WTC11 (cell line): ENCODE measurements at regions of chr1 and their contacts with region 1.

Region 1: DNA sequence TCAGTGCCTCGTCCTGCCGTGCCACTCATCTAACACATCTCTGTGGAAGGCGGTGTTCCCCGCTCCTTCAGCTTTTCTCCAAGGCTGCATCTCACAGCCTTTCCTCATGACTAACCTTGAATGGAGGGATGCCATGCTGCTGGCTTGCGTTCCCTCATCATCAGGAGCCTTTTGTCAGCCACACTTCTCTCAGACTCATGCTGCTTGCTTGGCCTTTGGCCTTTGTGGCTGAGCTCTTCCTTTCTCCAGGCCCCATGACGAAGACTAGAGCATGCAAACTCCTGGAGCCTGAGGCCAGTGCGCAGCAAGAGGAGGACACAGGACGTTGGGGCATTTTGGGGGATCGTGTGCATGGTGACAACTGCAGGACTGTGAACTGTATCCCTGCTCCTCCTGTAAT is 70.8 kb downstream of the SYT2 start:
- DNase-seq: no peak
- ATAC-seq: no peak
- H3K4me3 Mint-ChIP-seq: no peak overlapping the region
- H3K27ac Mint-ChIP-seq: no peak overlapping the region
- H3K4me1 Mint-ChIP-seq: peaks cover 50% of the 10 kb centered on the region
- H3K27me3 Mint-ChIP-seq: peaks cover 27% of the 10 kb centered on the region
- CTCF ChIP-seq: no peak

Region 2: DNA sequence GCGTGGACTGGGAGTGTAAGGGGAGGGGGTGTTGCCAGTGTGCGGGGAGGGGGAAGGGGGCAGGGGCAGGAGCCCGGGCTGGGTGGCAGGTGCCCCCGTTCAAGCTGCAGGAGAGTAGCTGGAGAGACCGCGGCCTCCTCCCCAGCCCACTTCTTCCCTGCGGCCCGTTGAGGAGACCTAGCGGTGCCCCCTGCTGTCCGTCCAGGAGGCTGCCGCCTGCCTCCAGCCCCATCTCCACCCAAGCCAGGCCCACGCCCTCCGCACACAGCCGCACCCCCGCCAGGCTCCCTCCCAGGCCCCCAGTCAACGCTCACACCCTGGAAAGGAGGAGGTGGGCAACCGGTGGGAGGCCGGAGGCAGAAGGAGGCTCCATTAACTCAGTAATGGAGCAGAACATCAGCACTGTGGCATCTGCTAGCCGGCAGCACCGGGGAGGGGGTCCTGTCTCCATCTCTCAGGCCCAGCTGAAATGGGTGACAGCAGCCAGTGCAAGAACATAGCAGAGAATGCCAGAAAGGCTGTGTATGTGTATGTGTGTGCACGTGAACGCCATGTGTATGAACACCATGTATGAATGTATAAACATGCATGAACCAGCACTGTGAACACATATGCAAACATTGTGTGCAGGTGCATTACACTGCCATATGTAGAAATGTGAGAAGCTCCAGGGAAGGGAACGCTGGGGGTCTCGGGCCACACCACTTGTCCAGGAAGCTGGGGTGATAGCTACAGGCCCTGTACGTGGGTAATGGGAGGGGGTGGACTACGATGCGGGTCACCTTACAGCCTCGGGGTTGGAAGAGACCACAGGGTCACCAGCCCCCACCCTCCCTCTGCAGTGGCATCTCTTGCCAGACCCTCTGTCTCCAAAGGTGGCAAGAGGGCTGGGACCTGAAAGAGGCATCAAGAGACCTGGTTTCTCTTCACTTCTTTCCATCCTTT is 13.8 kb before region 1 on chr1:
- CTCF ChIA-PET with region 1: interaction called, 21 read pairs
- POLR2A ChIA-PET with region 1: no interaction called
- DNase-seq: peak; percentile 84
- ATAC-seq: peak; percentile 84
- H3K4me3 Mint-ChIP-seq: no peak overlapping the region
- H3K27ac Mint-ChIP-seq: no peak overlapping the region
- H3K4me1 Mint-ChIP-seq: peaks cover 27% of the 10 kb centered on the region
- H3K27me3 Mint-ChIP-seq: no peaks in the 10 kb centered on the region
- CTCF ChIP-seq: peak; percentile 49